ENCODE measurements at regions of chr5 and their contacts with region 1.

Region 1: GRCh38 chr5:50962934-50963872 is 296.8 kb downstream of the PARP8 start:
- DNase-seq: peak; percentile 36
- H3K4me3 ChIP-seq: peak overlapping the region; percentile 37 to 48 (median 38)
- H3K27ac ChIP-seq: no peak overlapping the region
- H3K4me1 ChIP-seq: peaks cover 10% of the 10 kb centered on the region
- H3K27me3 ChIP-seq: peaks cover 50% of the 10 kb centered on the region
- CTCF ChIP-seq: peak; percentile 97 to 98

Region 2: GRCh38 chr5:51001227-51001923 is 38.2 kb after region 1 on chr5:
- CTCF ChIA-PET with region 1: no interaction called
- dilution Hi-C with region 1: no loop called
- in situ Hi-C with region 1: no loop called
- intact Hi-C with region 1: no loop called
- DNase-seq: no peak
- H3K4me3 ChIP-seq: no peak overlapping the region
- H3K27ac ChIP-seq: no peak overlapping the region
- H3K4me1 ChIP-seq: no peaks in the 10 kb centered on the region
- H3K27me3 ChIP-seq: peaks cover 1% of the 10 kb centered on the region
- CTCF ChIP-seq: no peak

Region 3: DNA sequence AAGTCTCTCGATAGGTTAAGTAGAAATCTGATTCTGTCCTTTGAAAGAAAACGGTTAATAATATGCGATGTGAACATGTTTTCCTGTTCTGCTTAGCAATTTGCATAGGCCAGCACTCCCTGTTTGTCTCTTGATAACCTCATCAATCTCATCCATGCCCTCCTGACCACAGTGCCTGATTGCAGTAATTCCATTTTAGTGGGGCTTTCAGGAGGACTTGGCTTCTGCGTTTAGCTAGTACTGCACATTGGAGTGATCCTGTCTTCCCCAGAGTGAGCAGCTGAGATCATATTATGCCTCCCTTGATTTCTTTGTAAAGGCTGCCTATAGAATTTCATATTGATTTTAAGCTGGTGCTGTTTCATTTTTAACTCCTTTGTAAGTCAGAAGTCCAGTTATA is 84.2 kb after region 1 on chr5:
- CTCF ChIA-PET with region 1: no interaction called
- dilution Hi-C with region 1: no loop called
- in situ Hi-C with region 1: no loop called
- intact Hi-C with region 1: no loop called
- DNase-seq: no peak
- H3K4me3 ChIP-seq: no peak overlapping the region
- H3K27ac ChIP-seq: no peak overlapping the region
- H3K4me1 ChIP-seq: peaks cover 3% of the 10 kb centered on the region
- H3K27me3 ChIP-seq: no peaks in the 10 kb centered on the region
- CTCF ChIP-seq: no peak

Region 4: GRCh38 chr5:51382763-51383490 is 419.7 kb after region 1 on chr5 and contains the start of gene ISL1:
- CTCF ChIA-PET with region 1: interaction called, 3 read pairs
- dilution Hi-C with region 1: no loop called
- in situ Hi-C with region 1: no loop called
- intact Hi-C with region 1: loop called (anchors 10 kb)
- DNase-seq: peak; percentile 77
- H3K4me3 ChIP-seq: peak within 1 kb of the TSS; percentile 7 to 48 (median 36)
- H3K27ac ChIP-seq: no peak within 1 kb of the TSS
- H3K4me1 ChIP-seq: peaks cover 17% of the 10 kb centered on the region
- H3K27me3 ChIP-seq: peaks cover 65% of the 10 kb centered on the region
- CTCF ChIP-seq: no peak
- total RNA-seq, gene ISL1: 0.28 TPM in 1 of 2 donors, not detected in the other

Region 5: GRCh38 chr5:51684794-51685355 is 721.7 kb after region 1 on chr5:
- CTCF ChIA-PET with region 1: no interaction called
- dilution Hi-C with region 1: no loop called
- in situ Hi-C with region 1: no loop called
- intact Hi-C with region 1: loop called (anchors 1 kb)
- DNase-seq: no peak
- H3K4me3 ChIP-seq: no peak overlapping the region
- H3K27ac ChIP-seq: no peak overlapping the region
- H3K4me1 ChIP-seq: no peaks in the 10 kb centered on the region
- H3K27me3 ChIP-seq: no peaks in the 10 kb centered on the region
- CTCF ChIP-seq: peak; percentile 43 to 63

Region 6: DNA sequence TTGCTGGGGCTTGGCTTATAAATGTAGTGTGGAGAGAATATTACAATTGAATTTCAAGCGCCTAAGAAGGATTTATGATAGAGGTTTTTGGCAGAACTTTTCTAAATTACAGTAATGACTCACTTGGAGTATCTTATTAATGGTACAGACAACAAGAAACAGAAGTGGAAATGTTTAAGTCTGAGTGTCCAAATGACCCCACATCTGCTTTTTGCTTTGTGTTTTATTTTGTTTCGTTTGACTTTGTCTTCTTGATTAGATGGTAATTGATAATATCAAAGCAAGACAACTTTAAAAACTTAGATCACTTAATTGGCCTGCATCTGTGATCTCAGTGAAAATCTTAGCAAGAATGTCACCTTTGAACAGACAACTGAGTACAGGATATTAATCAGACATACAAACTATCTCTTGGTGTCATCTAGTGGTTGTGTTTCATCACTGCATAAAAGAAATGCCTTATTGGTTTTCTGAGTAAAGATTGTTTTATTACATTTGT is 997.5 kb after region 1 on chr5:
- CTCF ChIA-PET with region 1: no interaction called
- dilution Hi-C with region 1: no loop called
- in situ Hi-C with region 1: no loop called
- intact Hi-C with region 1: loop called (anchors 1 kb)
- DNase-seq: peak; percentile 17
- H3K4me3 ChIP-seq: no peak overlapping the region
- H3K27ac ChIP-seq: no peak overlapping the region
- H3K4me1 ChIP-seq: no peaks in the 10 kb centered on the region
- H3K27me3 ChIP-seq: no peaks in the 10 kb centered on the region
- CTCF ChIP-seq: peak; percentile 77 to 80

Region 7: DNA sequence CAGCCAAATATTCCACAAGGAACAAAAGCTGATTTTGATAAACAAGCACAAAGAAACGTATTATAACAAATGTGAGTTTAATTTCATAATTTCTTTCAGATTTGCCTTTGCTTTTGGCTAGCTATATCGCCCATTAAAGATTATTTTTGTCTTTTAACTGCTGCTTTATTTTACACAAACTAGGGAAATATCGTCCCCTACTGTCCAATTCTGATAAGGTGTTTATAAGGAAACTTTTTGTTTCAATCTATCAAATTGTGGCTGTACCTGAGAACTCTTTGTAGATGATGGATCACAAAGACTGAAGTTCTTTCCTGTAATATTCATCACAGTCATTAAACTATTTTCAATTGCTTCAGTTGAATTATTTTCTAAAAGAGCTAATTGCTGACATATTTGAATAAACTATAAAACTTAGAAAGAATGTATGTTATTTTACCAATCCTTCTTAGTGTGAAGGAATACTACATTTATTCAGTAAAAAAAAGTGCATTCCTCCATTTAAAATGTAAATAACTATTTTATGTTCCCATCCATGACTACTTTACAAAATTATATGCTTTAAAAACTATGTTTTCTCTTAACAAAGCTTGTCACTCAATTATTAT is 1393.2 kb after region 1 on chr5:
- CTCF ChIA-PET with region 1: no interaction called
- dilution Hi-C with region 1: no loop called
- in situ Hi-C with region 1: no loop called
- intact Hi-C with region 1: loop called (anchors 1 kb)
- DNase-seq: no peak
- H3K4me3 ChIP-seq: no peak overlapping the region
- H3K27ac ChIP-seq: no peak overlapping the region
- H3K4me1 ChIP-seq: no peaks in the 10 kb centered on the region
- H3K27me3 ChIP-seq: no peaks in the 10 kb centered on the region
- CTCF ChIP-seq: peak; percentile 72 to 84